ENCODE measurements at regions of chr12 and their contacts with region 1.

Region 1: DNA sequence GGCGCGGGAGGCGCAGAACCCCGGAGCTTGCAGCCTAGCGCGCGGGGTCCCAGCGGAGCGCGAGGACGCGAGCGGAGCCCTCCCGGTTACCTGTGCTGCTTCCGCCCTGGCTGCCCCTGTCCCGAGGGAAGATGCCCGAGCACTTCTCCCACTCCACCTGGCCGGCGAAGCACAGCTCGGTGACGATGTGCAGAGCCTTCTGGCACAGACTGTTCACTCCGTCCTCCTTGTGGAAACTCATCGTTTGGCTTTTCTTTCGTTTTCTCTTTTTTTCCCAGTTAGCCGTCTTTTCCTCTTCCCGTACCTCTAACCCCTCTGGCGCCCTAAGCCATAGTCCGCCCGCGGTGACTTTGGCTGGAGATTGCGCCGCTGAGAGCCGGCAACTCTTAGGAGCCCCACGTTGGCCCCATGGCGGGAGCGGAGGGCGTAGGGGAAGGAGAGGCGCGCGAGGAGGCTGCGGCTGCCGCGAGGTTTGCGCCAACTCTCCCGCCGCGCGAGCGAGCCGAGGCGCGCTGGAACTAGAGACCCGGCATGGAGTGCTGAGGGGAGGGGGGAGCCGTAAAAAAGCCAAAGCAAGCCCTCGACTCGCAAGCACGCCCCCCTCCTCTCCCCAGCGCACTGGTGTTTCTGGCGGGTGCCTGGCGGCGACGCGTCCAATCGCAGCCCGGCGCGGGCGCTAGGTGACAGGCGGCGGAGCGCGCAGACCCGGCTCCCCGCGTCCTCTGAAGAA is at the start of gene SYT10:
- DNase-seq: peak; percentile 30
- H3K4me3 Mint-ChIP-seq: peak within 1 kb of the TSS; percentile 88
- H3K27ac Mint-ChIP-seq: peak within 1 kb of the TSS; percentile 75
- H3K4me1 Mint-ChIP-seq: no peaks in the 10 kb centered on the region
- H3K27me3 Mint-ChIP-seq: no peaks in the 10 kb centered on the region
- CTCF ChIP-seq: no peak
- total RNA-seq, gene SYT10: 2.9 and 4.8 TPM in 2 replicates

Region 2: GRCh38 chr12:33450480-33450879 is 11.0 kb after region 1 on chr12:
- CTCF ChIA-PET with region 1: no interaction called
- intact Hi-C with region 1: no loop called
- DNase-seq: no peak
- H3K4me3 Mint-ChIP-seq: no peak overlapping the region
- H3K27ac Mint-ChIP-seq: no peak overlapping the region
- H3K4me1 Mint-ChIP-seq: no peaks in the 10 kb centered on the region
- H3K27me3 Mint-ChIP-seq: no peaks in the 10 kb centered on the region
- CTCF ChIP-seq: no peak

Region 3: GRCh38 chr12:33587870-33588712 is 148.6 kb after region 1 on chr12:
- CTCF ChIA-PET with region 1: no interaction called
- intact Hi-C with region 1: loop called (anchors 5 kb)
- DNase-seq: peak; percentile 30
- H3K4me3 Mint-ChIP-seq: peak overlapping the region; percentile 32
- H3K27ac Mint-ChIP-seq: peak overlapping the region; percentile 57
- H3K4me1 Mint-ChIP-seq: peaks cover 25% of the 10 kb centered on the region
- H3K27me3 Mint-ChIP-seq: no peaks in the 10 kb centered on the region
- CTCF ChIP-seq: no peak

Measured in Calu3 (cell line).